ENCODE measurements at regions of chr2 and their contacts with region 1.

Region 1: GRCh38 chr2:237744613-237745249 is 53.8 kb upstream of the RBM44 start:
- DNase-seq: peak; percentile 84
- CTCF ChIP-seq: peak; percentile 96

Region 2: DNA sequence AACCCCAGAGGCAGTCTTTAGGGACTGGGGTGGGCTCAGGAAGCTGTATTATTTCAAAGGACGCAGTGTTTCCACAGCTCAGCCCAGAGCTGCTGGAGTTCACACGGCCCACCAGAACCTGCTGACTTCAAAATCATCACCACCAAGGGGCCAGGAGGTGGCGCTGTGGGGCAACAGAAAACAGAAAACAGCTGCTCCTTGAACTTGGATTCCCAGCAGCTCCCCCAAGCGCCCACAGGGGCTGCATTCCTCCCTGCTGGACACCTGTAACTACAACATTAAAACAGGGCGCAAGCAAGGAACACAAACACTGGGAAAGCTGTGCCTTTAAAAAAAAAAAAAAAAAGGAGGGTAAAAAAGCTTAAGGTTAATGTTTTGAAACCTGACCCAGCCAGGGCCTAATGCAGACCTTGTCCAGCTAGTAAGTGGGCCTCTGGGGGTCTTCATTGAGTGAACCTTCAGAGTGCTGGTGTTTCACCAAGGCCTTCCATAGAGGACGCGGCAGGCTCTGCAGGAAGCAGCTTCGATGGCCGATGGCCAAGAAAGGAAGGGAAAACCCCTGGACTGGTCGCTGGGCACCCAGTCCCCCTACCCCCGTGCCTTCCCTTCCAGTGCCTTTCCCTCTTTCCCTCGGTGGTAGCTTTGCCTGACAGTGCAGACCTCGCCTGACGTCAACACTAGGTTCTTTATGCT is 231.8 kb before region 1 on chr2:
- CTCF ChIA-PET with region 1: interaction called, 11 read pairs
- POLR2A ChIA-PET with region 1: no interaction called
- DNase-seq: peak; percentile 88
- CTCF ChIP-seq: peak; percentile 88

Region 3: GRCh38 chr2:237603718-237604362 is 140.9 kb before region 1 on chr2:
- CTCF ChIA-PET with region 1: interaction called, 11 read pairs
- POLR2A ChIA-PET with region 1: no interaction called
- DNase-seq: peak; percentile 52
- CTCF ChIP-seq: no peak

Region 4: DNA sequence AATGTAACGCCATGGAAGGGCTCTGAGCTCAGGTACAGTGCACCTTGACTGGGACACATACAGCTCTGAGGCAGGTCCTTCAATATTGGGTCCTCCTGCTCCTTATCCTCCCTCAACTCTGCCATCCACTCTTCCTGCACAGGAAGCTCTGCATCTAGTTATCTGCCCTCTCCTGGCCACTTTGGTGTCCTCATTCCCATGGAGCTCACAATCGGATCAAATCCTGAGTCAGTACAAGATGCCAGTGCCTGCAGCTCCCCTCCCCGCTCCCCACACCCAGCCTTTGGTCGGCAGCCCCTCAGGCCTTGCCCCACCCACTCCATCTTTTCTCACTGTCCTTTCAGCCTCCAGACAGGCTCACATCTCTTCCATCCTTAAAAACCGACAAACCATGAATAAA is 59.3 kb before region 1 on chr2:
- CTCF ChIA-PET with region 1: interaction called, 32 read pairs
- POLR2A ChIA-PET with region 1: no interaction called
- DNase-seq: no peak
- CTCF ChIP-seq: no peak

Region 5: GRCh38 chr2:237700512-237701032 is 44.2 kb before region 1 on chr2:
- CTCF ChIA-PET with region 1: interaction called, 27 read pairs
- POLR2A ChIA-PET with region 1: no interaction called
- DNase-seq: peak; percentile 61
- CTCF ChIP-seq: no peak

Region 6: DNA sequence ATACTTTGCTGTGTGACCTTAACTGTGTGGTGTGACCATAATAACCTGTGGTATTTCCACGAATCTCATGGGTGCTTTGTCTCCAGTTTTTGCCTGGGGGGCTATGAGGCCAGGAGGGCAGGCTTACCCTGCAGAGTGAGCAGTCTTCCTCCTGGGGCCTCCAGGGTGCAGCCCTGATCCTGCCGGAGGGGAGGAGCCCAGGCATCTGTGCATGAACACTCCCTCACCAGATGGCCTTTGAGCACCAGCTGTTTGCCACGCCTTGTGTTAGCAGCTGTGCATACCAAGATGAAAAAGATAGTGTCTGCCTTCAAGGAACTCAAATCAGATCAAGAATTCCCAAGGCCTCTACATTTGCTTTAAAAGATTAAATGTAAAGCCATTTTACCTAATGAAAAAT is 21.1 kb before region 1 on chr2:
- CTCF ChIA-PET with region 1: interaction called, 113 read pairs
- POLR2A ChIA-PET with region 1: no interaction called
- DNase-seq: peak; percentile 52
- CTCF ChIP-seq: no peak

Region 7: GRCh38 chr2:238077292-238077691 is 332.6 kb after region 1 on chr2:
- CTCF ChIA-PET with region 1: no interaction called
- POLR2A ChIA-PET with region 1: no interaction called
- DNase-seq: no peak
- CTCF ChIP-seq: no peak

Region 8: DNA sequence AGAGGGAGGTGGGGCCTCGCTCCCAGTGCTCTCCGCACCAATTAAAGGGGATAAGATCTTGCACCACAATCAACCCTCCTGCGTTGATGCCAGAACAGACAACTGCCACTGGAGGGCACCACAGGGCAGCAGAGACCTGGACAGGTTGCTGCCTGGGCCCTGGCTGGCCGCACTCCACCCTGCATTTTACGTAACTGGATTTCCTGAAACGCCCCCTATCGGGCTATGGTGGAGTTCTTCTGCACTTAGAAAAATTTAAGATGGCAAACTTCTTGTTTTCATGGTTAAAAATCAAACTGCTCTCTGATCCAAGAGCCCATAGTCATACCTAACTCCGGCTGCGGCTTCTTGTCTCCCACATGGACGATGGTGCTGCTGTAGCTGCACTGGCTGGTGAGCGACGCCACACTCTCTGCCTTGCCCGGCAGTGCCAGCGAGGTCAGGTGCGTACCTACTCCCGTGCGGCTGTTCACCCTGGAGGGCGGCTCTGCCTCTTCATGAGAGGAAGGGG is 511.9 kb after region 1 on chr2:
- CTCF ChIA-PET with region 1: no interaction called
- POLR2A ChIA-PET with region 1: no interaction called
- DNase-seq: peak; percentile 79
- CTCF ChIP-seq: peak; percentile 50